ENCODE measurements at regions of chr10 and their contacts with region 1.

Region 1: GRCh38 chr10:69004821-69005220 is 16.2 kb downstream of the KIFBP start:
- DNase-seq: peak; percentile 70

Region 2: GRCh38 chr10:69123747-69124562 is 119.1 kb after region 1 on chr10 and contains the start of gene VPS26A:
- in situ Hi-C with region 1: loop called (anchors 25 kb)
- DNase-seq: peak; percentile 98

Region 3: DNA sequence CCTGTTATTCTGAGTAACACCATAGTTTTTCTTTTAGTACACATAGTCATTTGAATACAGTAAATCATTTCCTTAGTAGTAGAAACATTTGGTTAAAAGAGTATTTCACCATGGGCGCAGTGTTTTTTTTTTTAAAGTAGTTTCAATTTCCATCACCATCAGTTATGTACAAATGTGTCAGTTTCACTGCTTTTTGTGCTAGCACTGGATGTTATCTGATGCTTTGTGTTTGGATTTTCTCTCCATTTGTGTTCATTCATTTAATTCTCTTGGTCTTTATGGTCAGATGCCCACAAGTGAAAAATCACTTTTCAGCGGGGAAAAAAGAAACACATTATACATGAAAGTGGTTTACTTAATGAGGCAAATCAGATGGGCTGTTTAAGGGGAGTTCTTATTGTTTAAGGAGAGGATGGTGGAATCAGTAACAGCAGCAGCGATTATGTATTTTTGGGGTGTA is 257.5 kb after region 1 on chr10:
- in situ Hi-C with region 1: no loop called
- DNase-seq: no peak

Region 4: GRCh38 chr10:70146489-70147258 is 1141.9 kb after region 1 on chr10 and contains the start of gene TYSND1:
- in situ Hi-C with region 1: no loop called
- DNase-seq: peak; percentile 100